Motor neuron (in vitro differentiated cells): ENCODE measurements at regions of chr1 and their contacts with region 1.

Region 1: DNA sequence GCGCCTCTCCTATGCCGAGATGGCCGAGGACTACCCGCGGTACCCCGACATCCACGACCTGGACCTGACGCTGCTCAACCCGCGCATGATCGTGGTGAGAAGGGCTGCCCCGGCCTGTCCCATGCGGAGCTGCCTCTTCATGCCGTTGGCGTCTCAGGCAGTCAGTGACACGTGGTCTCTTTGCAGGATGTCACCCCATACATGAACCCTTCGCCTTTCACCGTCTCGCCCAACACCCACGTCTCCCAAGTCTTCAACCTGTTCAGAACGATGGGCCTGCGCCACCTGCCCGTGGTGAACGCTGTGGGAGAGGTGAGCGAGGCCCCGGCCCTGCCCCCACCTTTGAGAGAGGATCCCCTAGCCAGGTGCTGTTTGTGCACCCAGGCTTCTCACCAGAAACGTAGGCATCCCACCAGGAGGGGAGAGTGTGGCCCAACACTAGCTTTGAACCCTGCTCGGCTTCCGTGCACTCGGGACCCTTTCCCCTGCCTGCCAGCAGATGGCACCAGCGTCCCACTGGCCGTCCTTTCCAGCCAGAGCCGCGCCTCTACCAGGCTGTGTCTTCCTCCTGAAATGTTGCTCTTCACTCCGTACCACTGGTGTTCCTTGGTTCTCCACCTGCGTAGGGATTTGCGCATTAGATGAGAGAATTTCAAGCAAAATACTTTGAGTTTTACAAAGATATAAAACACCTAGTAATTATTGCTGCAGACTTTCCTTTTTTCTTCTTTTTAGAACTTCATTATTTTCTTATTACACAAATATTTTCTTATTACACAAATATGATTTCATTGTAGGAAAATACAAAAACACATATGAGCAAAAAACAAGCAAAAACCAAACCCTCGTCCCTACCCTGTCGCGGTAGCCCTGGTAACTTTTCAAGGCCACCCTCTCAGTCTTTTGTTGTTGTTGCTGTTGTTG is 9.0 kb downstream of the NPPA start:
- ATAC-seq: peak; percentile 38 to 91 (median 68)
- H3K4me3 ChIP-seq: no peak overlapping the region
- H3K27ac ChIP-seq: no peak overlapping the region
- H3K4me1 ChIP-seq: peaks cover 9 to 19% of the 10 kb centered on the region in 2 donors

Region 2: GRCh38 chr1:11893907-11894251 is 55.3 kb after region 1 on chr1:
- in situ Hi-C with region 1: loop called in 2 of 9 experiments (anchors 5 to 10 kb)
- ATAC-seq: peak; percentile 78 to 96 (median 82)
- H3K4me3 ChIP-seq: no peak overlapping the region
- H3K27ac ChIP-seq: no peak overlapping the region
- H3K4me1 ChIP-seq: peaks cover 12 to 16% of the 10 kb centered on the region in 2 donors

Region 3: DNA sequence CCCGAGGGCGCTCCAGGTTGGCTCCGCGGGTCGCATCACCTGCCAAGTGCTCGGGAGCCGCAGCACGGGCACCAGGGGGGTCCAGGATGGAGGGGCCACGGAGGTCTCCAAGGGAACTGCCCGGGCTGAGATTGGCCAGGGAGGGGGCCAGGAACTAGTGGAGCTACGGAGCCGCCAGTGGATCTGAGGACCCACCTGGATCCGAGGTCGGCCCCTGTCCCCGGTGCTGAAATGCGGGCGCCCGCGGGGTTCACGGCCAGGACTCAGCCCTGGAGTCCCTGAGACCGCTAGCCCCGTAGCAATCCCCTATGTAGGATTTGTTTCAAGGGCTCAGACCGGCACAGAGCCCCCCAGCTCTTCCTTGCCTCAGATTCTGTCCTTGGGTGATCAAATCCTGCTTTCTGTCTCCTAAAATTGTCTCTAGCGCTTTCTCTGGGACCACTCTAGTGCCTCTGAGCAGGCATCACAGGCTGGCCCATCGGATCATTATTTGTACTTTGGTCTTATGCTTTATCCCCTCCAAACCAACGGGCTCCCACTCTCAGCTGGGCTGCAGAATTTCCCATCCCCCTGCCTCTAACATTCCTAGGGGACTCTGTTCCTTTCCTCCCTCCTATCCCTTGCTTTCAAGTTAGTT is 60.3 kb after region 1 on chr1:
- in situ Hi-C with region 1: loop called in 2 of 9 experiments (anchors 5 to 10 kb)
- ATAC-seq: peak; percentile 35 to 72 (median 48)
- H3K4me3 ChIP-seq: no peak overlapping the region
- H3K27ac ChIP-seq: no peak overlapping the region
- H3K4me1 ChIP-seq: peaks cover 7 to 18% of the 10 kb centered on the region in 2 donors

Region 4: GRCh38 chr1:12208764-12209494 is 370.3 kb after region 1 on chr1:
- in situ Hi-C with region 1: loop called in 1 of 9 experiments (anchors 25 kb)
- ATAC-seq: peak; percentile 91 to 99 (median 94)
- H3K4me3 ChIP-seq: no peak overlapping the region
- H3K27ac ChIP-seq: no peak overlapping the region
- H3K4me1 ChIP-seq: peaks cover 11 to 12% of the 10 kb centered on the region in 2 donors